ENCODE measurements at regions of chr1 and their contacts with region 1.

Region 1: DNA sequence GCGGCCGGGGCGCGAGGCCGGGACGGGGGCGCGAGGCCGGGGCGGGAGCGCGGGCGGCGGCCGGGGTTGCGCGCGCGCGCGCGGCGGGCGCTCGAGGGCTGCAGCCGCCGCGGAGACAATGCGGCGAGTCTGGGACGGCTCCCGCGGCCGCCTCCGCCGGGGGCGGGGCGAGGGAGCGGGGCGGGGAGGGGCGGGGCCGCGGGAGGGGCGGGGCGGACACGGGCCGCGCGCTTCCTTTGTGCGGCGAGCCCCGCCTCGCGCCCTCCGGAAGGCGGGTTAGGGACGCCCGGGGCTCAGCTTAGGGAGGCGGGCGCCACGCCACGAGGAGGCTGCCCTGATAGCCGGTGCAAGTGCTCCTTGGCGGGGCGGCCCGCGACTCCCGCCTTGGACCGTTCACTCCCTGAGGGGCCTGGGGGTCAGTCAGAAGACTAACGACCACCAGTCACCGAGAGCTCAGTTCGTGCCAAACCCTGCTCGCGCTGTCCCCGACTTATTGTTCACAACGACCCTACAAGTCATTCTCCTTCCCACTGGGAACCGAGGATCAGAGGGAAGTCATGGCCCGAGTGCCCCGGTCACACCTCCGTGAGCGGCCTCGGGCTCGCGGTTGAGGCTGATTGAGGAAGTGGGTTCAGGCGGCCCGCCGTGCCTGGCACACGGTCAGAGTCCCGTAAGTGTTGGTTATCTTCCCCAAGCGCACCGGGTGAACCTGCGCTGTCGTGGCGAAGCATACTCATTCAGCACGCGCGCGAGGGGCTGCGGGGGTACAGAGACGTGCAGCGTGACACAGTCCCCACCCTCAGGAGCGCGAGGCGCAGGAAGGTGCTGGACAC is 29.1 kb upstream of the A3GALT2 start:
- DNase-seq: peak; percentile 79
- H3K4me3 Mint-ChIP-seq: peak overlapping the region; percentile 82
- H3K27ac Mint-ChIP-seq: peak overlapping the region; percentile 89
- H3K4me1 Mint-ChIP-seq: peaks cover 42% of the 10 kb centered on the region
- H3K27me3 Mint-ChIP-seq: peaks cover 3% of the 10 kb centered on the region

Region 2: DNA sequence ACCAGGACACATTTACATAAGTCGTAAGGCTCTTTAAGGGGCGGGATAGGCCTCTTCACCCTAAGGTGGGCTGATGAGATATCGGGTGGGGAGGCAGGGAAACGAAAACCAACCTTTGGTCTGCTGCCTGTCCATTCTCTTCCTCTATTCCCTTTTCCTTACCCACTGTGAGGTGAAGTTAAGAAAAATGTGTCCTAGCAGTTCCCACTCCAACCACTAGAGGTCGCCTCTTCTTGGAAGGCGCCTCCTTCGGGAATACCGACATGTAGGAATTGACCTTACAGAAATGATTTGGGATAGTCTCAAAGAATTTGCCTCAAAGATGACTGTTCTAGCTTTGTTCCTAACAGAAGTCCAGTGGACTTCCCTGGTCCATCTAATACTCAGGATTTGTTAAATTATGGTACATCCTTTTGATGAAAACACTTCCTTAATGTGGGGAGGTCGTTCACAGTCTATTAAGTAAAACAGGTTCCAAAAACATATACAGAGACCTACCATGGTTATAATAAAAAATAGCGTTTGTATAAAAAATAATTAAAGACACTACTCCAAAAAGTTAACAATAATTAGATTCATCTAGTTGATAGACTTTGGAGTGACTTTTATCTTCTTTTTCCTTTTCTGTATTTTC is 254.9 kb before region 1 on chr1:
- intact Hi-C with region 1: loop called (anchors 5 kb)
- DNase-seq: no peak
- H3K4me3 Mint-ChIP-seq: no peak overlapping the region
- H3K27ac Mint-ChIP-seq: no peak overlapping the region
- H3K4me1 Mint-ChIP-seq: peaks cover 45% of the 10 kb centered on the region
- H3K27me3 Mint-ChIP-seq: no peaks in the 10 kb centered on the region

Region 3: GRCh38 chr1:33256701-33257399 is 93.1 kb before region 1 on chr1:
- intact Hi-C with region 1: loop called (anchors 5 kb)
- DNase-seq: peak; percentile 54
- H3K4me3 Mint-ChIP-seq: peak overlapping the region; percentile 92
- H3K27ac Mint-ChIP-seq: peak overlapping the region; percentile 94
- H3K4me1 Mint-ChIP-seq: peaks cover 24% of the 10 kb centered on the region
- H3K27me3 Mint-ChIP-seq: peaks cover 3% of the 10 kb centered on the region

Region 4: DNA sequence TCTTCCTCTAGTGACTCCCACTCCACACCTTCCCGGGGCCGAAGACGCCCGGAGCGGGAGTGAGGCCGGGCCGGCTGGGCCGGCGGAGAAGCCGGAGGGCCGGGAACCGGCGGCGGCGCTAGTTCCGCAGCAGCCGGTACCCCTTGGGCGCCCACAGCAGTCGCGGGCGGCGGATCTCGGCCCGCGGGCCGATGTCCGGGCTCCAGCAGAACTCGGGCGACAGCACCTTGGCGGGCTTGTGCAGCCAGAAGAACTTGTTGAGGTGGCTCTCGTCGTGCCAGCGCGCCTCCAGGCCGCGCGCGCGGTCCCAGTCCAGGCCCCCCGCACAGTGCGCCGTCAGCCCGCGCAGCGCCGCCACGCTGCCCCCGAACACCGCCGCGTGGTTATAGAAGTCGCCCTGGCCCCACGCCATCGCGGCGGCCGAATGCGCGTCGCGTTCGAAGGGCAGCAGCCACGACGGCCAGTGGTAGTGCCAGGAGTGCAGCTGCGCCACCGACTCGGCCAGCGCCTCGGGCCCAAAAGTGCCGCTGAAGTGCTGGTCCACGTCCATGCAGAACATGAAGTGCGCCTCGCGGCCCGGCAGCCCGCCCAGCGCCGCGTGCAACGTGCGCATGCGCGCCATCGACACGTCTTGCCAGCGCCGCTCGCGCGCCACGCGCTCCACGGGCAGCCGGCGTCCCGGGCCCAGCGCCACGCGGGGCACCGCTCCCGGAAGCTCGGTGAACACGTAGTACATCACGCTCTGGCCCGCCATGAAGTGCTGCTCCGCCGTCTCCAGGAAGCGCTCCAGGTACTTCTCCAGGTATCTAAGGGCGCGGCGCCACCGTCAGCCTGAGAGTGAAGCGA is 43.1 kb before region 1 on chr1:
- intact Hi-C with region 1: no loop called
- DNase-seq: no peak
- H3K4me3 Mint-ChIP-seq: no peak overlapping the region
- H3K27ac Mint-ChIP-seq: no peak overlapping the region
- H3K4me1 Mint-ChIP-seq: peaks cover 20% of the 10 kb centered on the region
- H3K27me3 Mint-ChIP-seq: peaks cover 14% of the 10 kb centered on the region

Region 5: DNA sequence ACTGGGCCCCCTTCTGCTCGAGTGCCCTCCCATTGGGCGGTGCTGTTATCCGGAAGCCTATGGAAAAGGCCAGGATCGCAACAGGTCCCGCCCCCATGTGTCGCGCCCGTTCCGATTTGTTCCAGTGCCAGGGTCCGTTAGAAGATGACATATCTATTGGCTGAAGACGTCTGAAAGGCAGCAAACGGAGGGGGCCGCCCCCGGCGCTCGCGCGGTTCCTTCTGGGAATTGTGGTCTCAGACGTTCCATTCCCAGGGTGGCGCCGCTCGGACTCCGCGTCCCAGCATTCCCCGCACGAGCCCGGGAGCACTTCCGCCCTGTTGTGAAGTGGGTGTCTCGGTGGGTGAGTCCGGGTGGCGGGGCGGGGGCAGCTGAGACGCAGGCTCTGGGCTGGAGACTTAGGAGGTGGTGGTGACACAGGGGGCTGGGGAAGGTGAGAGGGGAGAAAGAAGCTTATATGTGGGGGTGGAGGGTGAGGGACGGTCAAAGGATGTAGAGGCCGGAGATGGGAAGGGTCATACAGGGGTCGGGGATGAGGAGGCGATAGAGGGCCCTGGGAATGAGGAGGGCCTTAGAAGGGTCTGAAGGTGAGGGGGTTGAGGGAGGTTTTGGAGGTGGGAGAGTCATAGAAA is 122.5 kb after region 1 on chr1 and contains the start of gene ZSCAN20:
- intact Hi-C with region 1: loop called (anchors 5 kb)
- DNase-seq: peak; percentile 82
- H3K4me3 Mint-ChIP-seq: peak within 1 kb of the TSS; percentile 81
- H3K27ac Mint-ChIP-seq: peak within 1 kb of the TSS; percentile 43
- H3K4me1 Mint-ChIP-seq: peaks cover 30% of the 10 kb centered on the region
- H3K27me3 Mint-ChIP-seq: no peaks in the 10 kb centered on the region
- total RNA-seq, gene ZSCAN20: 2.6 and 4.1 TPM in 2 replicates